ENCODE measurements at regions of chrX and their contacts with region 1.

Region 1: DNA sequence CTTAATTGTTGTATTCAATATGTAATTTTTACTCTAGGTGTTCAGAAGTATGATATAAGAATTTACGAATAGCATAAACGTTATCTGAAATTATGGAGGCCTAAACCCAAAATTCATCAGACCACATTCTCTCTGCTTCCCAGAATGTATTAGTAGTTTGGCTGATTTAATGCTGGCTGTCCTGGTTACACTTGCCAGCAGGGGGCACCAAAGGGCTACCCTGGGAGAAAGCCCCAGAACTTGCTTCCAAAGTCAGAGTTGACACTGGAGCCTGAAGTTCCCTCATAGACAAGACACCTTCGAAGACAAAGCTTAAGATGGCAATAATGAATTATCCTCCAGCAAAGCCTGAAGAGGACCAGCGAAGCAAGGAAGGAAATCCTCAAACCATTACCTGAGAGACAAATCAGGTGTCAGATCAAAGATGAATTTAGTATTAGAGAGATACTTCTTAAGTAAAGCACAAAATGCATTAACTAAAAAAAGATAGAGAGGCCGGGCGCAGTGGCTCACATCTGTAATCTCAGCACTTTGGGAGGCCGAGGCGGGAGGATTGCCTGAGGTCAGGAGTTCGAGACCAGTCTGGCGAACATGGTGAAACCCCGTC is 11.3 kb upstream of the ANOS1 start:
- DNase-seq: peak; percentile 43 to 58 (median 51)
- H3K4me3 ChIP-seq: no peak overlapping the region
- H3K4me3 Mint-ChIP-seq: no peak overlapping the region
- H3K27ac ChIP-seq: no peak overlapping the region
- H3K27ac Mint-ChIP-seq: no peak overlapping the region
- H3K4me1 ChIP-seq: no peaks in the 10 kb centered on the region
- H3K4me1 Mint-ChIP-seq: no peaks in the 10 kb centered on the region
- H3K27me3 ChIP-seq: no peaks in the 10 kb centered on the region
- H3K27me3 Mint-ChIP-seq: peaks cover 5 to 7% of the 10 kb centered on the region in 2 donors

Region 2: GRCh38 chrX:7996414-7996813 is 746.8 kb before region 1 on chrX:
- CTCF ChIA-PET with region 1: interaction called, 11 read pairs
- POLR2A ChIA-PET with region 1: no interaction called
- intact Hi-C with region 1: no loop called
- DNase-seq: peak; percentile 22 to 36 (median 32)
- H3K4me3 ChIP-seq: no peak overlapping the region
- H3K4me3 Mint-ChIP-seq: no peak overlapping the region
- H3K27ac ChIP-seq: no peak overlapping the region
- H3K27ac Mint-ChIP-seq: no peak overlapping the region
- H3K4me1 ChIP-seq: no peaks in the 10 kb centered on the region
- H3K4me1 Mint-ChIP-seq: no peaks in the 10 kb centered on the region
- H3K27me3 ChIP-seq: no peaks in the 10 kb centered on the region
- H3K27me3 Mint-ChIP-seq: peaks cover 0 to 3% of the 10 kb centered on the region in 2 donors